MCF 10A (cell line): ENCODE measurements at regions of chr11 and their contacts with region 1.

Region 1: GRCh38 chr11:10653926-10654810 is 39.4 kb downstream of the IRAG1 start:
- DNase-seq: peak; percentile 80
- H3K4me3 Mint-ChIP-seq: no peak overlapping the region
- H3K27ac Mint-ChIP-seq: no peak overlapping the region
- H3K4me1 Mint-ChIP-seq: peaks cover 4% of the 10 kb centered on the region
- H3K27me3 Mint-ChIP-seq: no peaks in the 10 kb centered on the region
- CTCF ChIP-seq: peak; percentile 87

Region 2: DNA sequence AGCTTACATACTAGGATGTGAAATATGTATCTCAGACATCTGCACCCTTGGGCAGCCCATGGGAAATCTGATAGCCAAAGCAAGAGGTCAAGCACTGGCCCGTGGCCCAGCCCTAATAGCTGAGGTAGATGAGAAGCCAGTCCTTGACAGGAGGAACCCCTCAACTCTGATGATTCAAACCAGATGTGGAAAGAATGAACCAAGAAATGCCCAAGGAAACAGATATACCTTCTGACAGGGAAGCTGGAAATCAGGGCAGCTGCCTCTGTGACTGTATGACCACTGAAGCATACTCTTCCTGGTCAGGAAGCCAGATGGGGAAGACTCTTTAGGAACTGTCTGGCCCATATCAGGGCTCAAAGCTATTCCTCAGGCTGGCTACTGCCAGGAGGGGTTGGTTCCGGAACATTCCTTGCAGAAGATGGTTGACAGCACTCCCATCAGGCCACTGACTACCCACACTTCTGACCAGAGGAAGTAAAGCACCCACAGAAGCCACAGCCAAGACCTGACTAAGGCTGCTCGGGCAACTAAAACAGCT is 866.1 kb before region 1 on chr11:
- CTCF ChIA-PET with region 1: no interaction called
- POLR2A ChIA-PET with region 1: no interaction called
- intact Hi-C with region 1: no loop called
- DNase-seq: no peak
- H3K4me3 Mint-ChIP-seq: no peak overlapping the region
- H3K27ac Mint-ChIP-seq: peak overlapping the region; percentile 43
- H3K4me1 Mint-ChIP-seq: no peaks in the 10 kb centered on the region
- H3K27me3 Mint-ChIP-seq: no peaks in the 10 kb centered on the region
- CTCF ChIP-seq: no peak

Region 3: DNA sequence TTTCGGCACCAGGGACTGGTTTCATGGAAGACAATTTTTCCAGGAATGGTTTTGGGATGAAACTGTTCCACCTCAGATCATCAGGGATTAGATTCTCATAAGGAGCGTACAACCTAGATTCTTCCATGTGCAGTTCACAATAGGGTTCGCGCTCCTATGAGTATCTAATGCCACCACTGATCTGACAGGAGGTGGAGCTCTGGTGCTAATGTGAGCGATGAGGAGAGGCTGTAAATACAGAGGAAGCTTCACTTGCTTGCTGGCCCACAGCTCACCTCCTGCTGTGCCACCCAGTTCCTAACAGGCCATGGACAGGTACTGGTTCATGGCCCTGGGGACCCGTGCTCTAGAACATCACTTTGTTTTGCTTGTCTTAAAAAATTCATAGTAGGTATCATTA is 240.9 kb before region 1 on chr11:
- CTCF ChIA-PET with region 1: interaction called, 14 read pairs
- POLR2A ChIA-PET with region 1: no interaction called
- intact Hi-C with region 1: no loop called
- DNase-seq: peak; percentile 44
- H3K4me3 Mint-ChIP-seq: no peak overlapping the region
- H3K27ac Mint-ChIP-seq: no peak overlapping the region
- H3K4me1 Mint-ChIP-seq: peaks cover 5% of the 10 kb centered on the region
- H3K27me3 Mint-ChIP-seq: no peaks in the 10 kb centered on the region
- CTCF ChIP-seq: no peak

Region 4: DNA sequence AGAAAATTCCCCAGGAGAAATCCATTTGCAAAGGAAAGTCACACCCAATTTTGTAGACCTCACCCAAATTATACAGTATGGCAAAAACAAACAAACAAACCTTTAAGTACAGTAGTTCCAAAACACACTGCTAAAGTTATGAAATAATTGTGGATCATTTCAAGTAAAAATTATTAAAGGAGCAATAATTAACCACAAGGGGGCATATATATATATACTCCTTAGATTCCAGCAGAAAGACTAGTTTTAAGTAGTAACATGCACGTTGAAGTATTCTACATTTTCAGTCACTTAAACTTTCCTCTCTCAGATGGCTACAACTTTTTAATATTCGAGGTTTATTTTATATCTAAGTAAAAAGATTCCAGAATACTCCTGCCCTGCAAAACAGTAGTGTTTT is 140.0 kb before region 1 on chr11:
- CTCF ChIA-PET with region 1: interaction called, 29 read pairs
- POLR2A ChIA-PET with region 1: no interaction called
- intact Hi-C with region 1: loop called (anchors 1 kb)
- DNase-seq: peak; percentile 14
- H3K4me3 Mint-ChIP-seq: no peak overlapping the region
- H3K27ac Mint-ChIP-seq: no peak overlapping the region
- H3K4me1 Mint-ChIP-seq: no peaks in the 10 kb centered on the region
- H3K27me3 Mint-ChIP-seq: no peaks in the 10 kb centered on the region
- CTCF ChIP-seq: peak; percentile 35

Region 5: GRCh38 chr11:10564696-10565318 is 89.4 kb before region 1 on chr11:
- CTCF ChIA-PET with region 1: interaction called, 16 read pairs
- POLR2A ChIA-PET with region 1: no interaction called
- intact Hi-C with region 1: loop called (anchors 1 kb)
- DNase-seq: no peak
- H3K4me3 Mint-ChIP-seq: no peak overlapping the region
- H3K27ac Mint-ChIP-seq: no peak overlapping the region
- H3K4me1 Mint-ChIP-seq: peaks cover 5% of the 10 kb centered on the region
- H3K27me3 Mint-ChIP-seq: no peaks in the 10 kb centered on the region
- CTCF ChIP-seq: peak; percentile 12

Region 6: GRCh38 chr11:10933455-10934292 is 279.5 kb after region 1 on chr11:
- CTCF ChIA-PET with region 1: no interaction called
- POLR2A ChIA-PET with region 1: no interaction called
- intact Hi-C with region 1: no loop called
- DNase-seq: peak; percentile 93
- H3K4me3 Mint-ChIP-seq: peak overlapping the region; percentile 80
- H3K27ac Mint-ChIP-seq: peak overlapping the region; percentile 29
- H3K4me1 Mint-ChIP-seq: peaks cover 25% of the 10 kb centered on the region
- H3K27me3 Mint-ChIP-seq: no peaks in the 10 kb centered on the region
- CTCF ChIP-seq: peak; percentile 90